Dorsolateral prefrontal cortex (tissue), 120 donors: ENCODE measurements at regions of chr16 and their contacts with region 1.

Region 1: GRCh38 chr16:9311303-9311954 is 220.0 kb downstream of the HAPSTR1 start:
- DNase-seq: peak in 7 of 10 donors; percentile 56 to 72 (median 66)
- H3K4me3 ChIP-seq: no peak overlapping the region
- H3K27ac ChIP-seq: peak overlapping the region in 33 of 59 donors; percentile 2 to 74 (median 38)
- H3K27me3 ChIP-seq: no peaks in the 10 kb centered on the region
- CTCF ChIP-seq: no peak

Region 2: DNA sequence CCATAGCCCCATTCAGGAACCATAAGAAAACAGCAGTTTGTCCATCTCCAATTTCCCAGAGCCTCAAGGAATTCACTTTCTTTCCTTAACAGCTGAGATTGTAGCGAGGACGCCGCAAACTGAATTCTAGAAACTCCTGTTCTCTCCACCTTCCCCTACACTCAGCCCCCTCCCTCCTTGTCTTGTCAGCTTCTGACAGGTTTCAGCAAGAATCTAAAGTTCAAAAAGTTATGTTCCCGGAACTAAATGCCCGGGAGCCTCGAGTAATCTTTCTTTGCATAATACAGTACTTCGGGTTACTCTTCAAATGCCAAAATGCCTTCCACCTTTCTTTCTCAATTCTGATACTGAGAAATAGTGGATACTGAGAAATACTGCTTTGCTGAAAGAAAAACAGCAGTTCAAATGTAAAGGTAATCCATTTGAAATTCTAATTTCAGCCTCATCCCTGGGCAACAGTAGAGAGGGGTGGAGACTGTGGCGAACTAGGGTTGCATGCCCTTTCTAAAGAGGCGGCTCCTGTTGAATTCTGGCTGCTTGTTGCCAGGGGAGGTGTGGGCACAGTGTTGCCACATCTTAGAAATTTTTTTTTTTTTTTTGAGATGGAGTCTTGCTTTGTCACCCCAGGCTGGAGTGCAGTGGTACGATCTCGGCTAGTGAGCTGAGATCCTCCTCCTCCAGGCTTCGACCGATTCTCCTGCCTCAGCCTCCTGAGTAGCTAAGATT is 284.2 kb before region 1 on chr16:
- intact Hi-C with region 1: no loop called
- DNase-seq: no peak
- H3K4me3 ChIP-seq: no peak overlapping the region
- H3K27ac ChIP-seq: no peak overlapping the region
- H3K27me3 ChIP-seq: peaks cover 0 to 15% (median 0%) of the 10 kb centered on the region in 45 donors
- CTCF ChIP-seq: no peak

Region 3: DNA sequence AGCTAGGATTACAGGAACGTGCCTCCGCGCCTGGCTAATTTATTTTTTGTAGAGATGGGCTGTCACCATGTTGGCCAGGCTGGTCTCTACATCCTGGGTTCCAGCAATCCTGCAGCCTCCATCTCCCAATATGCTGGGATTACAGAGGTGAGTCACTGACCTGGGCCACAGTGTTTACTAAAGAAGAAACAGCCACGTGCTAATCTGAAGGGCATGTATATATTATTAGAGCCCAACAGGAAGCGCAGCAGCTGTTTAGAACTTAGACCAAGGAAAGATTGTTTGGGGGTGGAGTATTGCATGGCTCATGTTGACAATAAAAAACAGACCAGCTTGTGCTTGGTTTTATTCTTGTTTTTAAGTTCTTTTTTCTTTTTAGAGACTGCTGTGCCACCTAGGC is 159.8 kb before region 1 on chr16:
- intact Hi-C with region 1: no loop called
- DNase-seq: no peak
- H3K4me3 ChIP-seq: no peak overlapping the region
- H3K27ac ChIP-seq: no peak overlapping the region
- H3K27me3 ChIP-seq: no peaks in the 10 kb centered on the region
- CTCF ChIP-seq: no peak

Region 4: DNA sequence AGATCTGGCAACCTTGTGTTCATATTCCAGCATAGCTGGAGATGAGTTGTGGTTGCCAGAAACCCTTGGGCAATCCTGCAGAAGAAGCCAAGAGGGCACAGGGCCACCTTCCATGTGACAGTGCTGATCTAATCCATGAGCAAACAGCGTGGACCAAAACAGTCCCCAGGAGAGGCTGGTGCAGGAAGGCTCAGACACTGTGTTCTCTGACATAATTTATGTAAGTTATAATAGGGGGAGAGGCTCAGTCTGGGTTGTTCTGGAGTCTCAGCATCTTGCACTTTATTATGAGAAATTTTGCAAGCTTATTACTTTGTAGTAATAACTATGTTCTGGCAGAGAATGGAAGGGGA is 53.9 kb after region 1 on chr16:
- intact Hi-C with region 1: loop called in 1 of 2 experiments (anchors 2 kb)
- DNase-seq: peak; percentile 67 to 95 (median 88)
- H3K4me3 ChIP-seq: peak overlapping the region in 22 of 59 donors; percentile 1 to 44 (median 24)
- H3K27ac ChIP-seq: peak overlapping the region in 58 of 59 donors; percentile 48 to 98 (median 85)
- H3K27me3 ChIP-seq: no peaks in the 10 kb centered on the region
- CTCF ChIP-seq: peak in 8 of 56 donors; percentile 8 to 35 (median 16)